Cardiac septum (tissue), 1 donor: ENCODE measurements at regions of chr18 and their contacts with region 1.

Region 1: GRCh38 chr18:48790226-48790874 is 160.4 kb downstream of the SMAD7 start:
- DNase-seq: peak; percentile 91

Region 2: GRCh38 chr18:48680339-48681221 is 109.8 kb before region 1 on chr18:
- intact Hi-C with region 1: loop called (anchors 1 kb)
- DNase-seq: peak; percentile 93